ENCODE measurements at regions of chr11 and their contacts with region 1.

Region 1: GRCh38 chr11:73931039-73931645 is 19.7 kb upstream of the DNAJB13 start:
- DNase-seq: peak; percentile 56
- H3K27ac ChIP-seq: no peak overlapping the region
- CTCF ChIP-seq: peak; percentile 30; the same call in 1 of the 2 replicates

Region 2: DNA sequence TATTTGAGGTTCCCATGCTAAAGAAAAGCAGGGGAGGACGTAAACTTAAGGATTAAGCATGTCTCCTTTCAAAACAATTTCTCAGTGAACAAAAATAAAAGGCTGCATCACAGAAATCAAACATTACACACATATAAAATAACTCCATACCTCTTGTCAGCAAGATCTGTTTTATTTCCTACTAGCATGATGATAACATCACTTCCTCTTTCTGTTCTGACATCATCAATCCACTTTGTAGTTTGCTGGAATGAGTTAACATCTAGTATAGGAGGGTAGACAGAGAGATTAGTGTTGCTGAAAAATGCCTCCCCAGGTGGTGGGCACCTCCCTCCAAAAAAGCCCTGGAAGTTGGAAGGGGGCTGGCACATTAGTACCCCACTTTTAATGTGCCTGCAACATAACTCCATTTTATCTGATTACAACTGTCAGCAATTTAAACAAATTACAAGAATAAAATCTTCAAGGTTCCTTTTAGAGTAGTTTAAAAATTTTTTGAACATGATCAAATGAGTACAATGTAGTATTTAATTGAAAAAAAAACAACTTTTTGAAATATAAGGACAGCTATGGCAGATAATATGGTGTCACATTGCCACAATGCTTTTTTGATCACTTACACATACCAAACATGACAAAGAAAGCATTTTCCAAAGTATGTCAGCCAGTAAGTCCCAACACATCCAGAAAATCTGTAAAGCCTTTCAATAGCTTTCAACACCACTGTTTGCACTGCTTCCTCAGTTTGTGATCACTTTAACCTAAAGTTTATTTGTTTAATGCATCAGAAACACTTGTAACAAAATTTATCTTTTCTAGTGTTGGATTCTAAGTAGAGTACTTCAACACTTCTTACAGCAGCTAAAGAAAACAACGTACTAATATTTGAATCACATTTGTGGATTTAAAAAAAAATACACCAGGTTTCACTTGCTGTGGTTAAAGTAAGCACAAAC is 214.8 kb before region 1 on chr11:
- CTCF ChIA-PET with region 1: no interaction called
- POLR2A ChIA-PET with region 1: no interaction called
- DNase-seq: no peak
- H3K27ac ChIP-seq: no peak overlapping the region
- CTCF ChIP-seq: no peak

Region 3: GRCh38 chr11:73950869-73951710 is 19.9 kb after region 1 on chr11 and contains the start of gene DNAJB13:
- CTCF ChIA-PET with region 1: interaction called, 11 read pairs
- POLR2A ChIA-PET with region 1: no interaction called
- DNase-seq: peak; percentile 71
- H3K27ac ChIP-seq: no peak within 1 kb of the TSS
- CTCF ChIP-seq: no peak

Region 4: GRCh38 chr11:74929431-74930363 is 998.6 kb after region 1 on chr11:
- CTCF ChIA-PET with region 1: interaction called, 10 read pairs
- POLR2A ChIA-PET with region 1: no interaction called
- DNase-seq: peak; percentile 47
- H3K27ac ChIP-seq: no peak overlapping the region
- CTCF ChIP-seq: peak; percentile 88

Measured in RWPE1 (cell line).